Caco-2 (cell line): ENCODE measurements at regions of chr14 and their contacts with region 1.

Region 1: GRCh38 chr14:50447461-50447860 is 50.8 kb upstream of the CDKL1 start:
- DNase-seq: no peak
- H3K4me3 ChIP-seq: no peak overlapping the region
- H3K4me3 Mint-ChIP-seq: no peak overlapping the region
- H3K27ac Mint-ChIP-seq: no peak overlapping the region
- H3K4me1 ChIP-seq: peaks cover 13% of the 10 kb centered on the region
- H3K4me1 Mint-ChIP-seq: no peaks in the 10 kb centered on the region
- H3K27me3 ChIP-seq: no peaks in the 10 kb centered on the region
- H3K27me3 Mint-ChIP-seq: no peaks in the 10 kb centered on the region
- CTCF ChIP-seq: no peak

Region 2: GRCh38 chr14:49560374-49560768 is 887.1 kb before region 1 on chr14:
- CTCF ChIA-PET with region 1: no interaction called
- POLR2A ChIA-PET with region 1: no interaction called
- intact Hi-C with region 1: no loop called
- DNase-seq: no peak
- H3K4me3 ChIP-seq: no peak overlapping the region
- H3K4me3 Mint-ChIP-seq: no peak overlapping the region
- H3K27ac Mint-ChIP-seq: no peak overlapping the region
- H3K4me1 ChIP-seq: no peaks in the 10 kb centered on the region
- H3K4me1 Mint-ChIP-seq: no peaks in the 10 kb centered on the region
- H3K27me3 ChIP-seq: no peaks in the 10 kb centered on the region
- H3K27me3 Mint-ChIP-seq: no peaks in the 10 kb centered on the region
- CTCF ChIP-seq: no peak

Region 3: GRCh38 chr14:50381823-50382287 is 65.6 kb before region 1 on chr14:
- CTCF ChIA-PET with region 1: no interaction called
- POLR2A ChIA-PET with region 1: no interaction called
- intact Hi-C with region 1: no loop called
- DNase-seq: peak in 1 of 2 experiments; percentile 6
- H3K4me3 ChIP-seq: no peak overlapping the region
- H3K4me3 Mint-ChIP-seq: no peak overlapping the region
- H3K27ac Mint-ChIP-seq: no peak overlapping the region
- H3K4me1 ChIP-seq: peaks cover 12% of the 10 kb centered on the region
- H3K4me1 Mint-ChIP-seq: peaks cover 8% of the 10 kb centered on the region
- H3K27me3 ChIP-seq: no peaks in the 10 kb centered on the region
- H3K27me3 Mint-ChIP-seq: no peaks in the 10 kb centered on the region
- CTCF ChIP-seq: no peak

Region 4: DNA sequence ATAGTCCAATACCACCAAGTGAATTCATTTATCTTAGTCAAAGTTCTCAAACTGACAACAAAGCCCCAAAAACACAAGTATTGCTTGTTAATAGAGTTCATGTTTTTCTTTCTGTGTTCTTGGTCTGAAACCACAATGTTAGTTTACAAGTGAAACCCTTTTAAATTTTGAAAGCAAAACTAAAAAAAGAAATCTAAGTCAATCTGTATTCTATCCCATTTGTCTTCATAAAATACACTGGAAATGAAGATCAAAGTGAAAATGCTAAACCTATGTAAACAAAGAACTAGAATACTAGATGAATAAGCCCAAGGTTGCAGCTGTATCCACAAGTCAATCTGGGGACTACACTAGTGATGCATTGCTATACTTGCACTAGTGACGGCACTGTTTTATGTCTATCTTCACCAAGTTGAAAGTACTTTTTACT is 74.5 kb after region 1 on chr14:
- CTCF ChIA-PET with region 1: no interaction called
- POLR2A ChIA-PET with region 1: no interaction called
- intact Hi-C with region 1: loop called (anchors 2 kb)
- DNase-seq: peak in 1 of 2 experiments; percentile 23
- H3K4me3 ChIP-seq: no peak overlapping the region
- H3K4me3 Mint-ChIP-seq: no peak overlapping the region
- H3K27ac Mint-ChIP-seq: no peak overlapping the region
- H3K4me1 ChIP-seq: peaks cover 22% of the 10 kb centered on the region
- H3K4me1 Mint-ChIP-seq: peaks cover 29% of the 10 kb centered on the region
- H3K27me3 ChIP-seq: no peaks in the 10 kb centered on the region
- H3K27me3 Mint-ChIP-seq: no peaks in the 10 kb centered on the region
- CTCF ChIP-seq: no peak

Region 5: DNA sequence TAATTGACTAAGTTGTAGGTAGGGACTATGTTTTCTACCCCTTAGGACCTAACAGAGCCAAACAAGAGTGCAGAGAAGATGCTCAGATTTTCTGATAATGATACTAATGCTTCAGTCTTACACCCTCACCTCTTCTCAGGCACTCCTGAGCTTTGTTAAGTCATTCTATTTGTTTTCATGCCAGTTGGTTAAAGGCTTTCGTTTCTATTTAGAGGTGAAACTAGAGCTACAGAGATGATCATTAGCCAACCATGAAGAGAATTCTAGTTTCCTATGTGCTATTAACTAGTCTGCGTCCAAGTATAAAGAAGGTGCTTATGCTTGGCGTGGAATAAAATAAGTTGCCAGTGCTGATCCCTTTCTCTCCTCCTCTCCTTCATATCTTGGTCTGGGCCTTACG is 531.4 kb after region 1 on chr14:
- CTCF ChIA-PET with region 1: no interaction called
- POLR2A ChIA-PET with region 1: no interaction called
- intact Hi-C with region 1: no loop called
- DNase-seq: no peak
- H3K4me3 ChIP-seq: no peak overlapping the region
- H3K4me3 Mint-ChIP-seq: no peak overlapping the region
- H3K27ac Mint-ChIP-seq: no peak overlapping the region
- H3K4me1 ChIP-seq: peaks cover 39% of the 10 kb centered on the region
- H3K4me1 Mint-ChIP-seq: peaks cover 28% of the 10 kb centered on the region
- H3K27me3 ChIP-seq: no peaks in the 10 kb centered on the region
- H3K27me3 Mint-ChIP-seq: no peaks in the 10 kb centered on the region
- CTCF ChIP-seq: no peak